Pancreas (tissue), 10 donors: ENCODE measurements at regions of chr9 and their contacts with region 1.

Region 1: GRCh38 chr9:127734747-127735529 is at the start of gene TOR2A:
- DNase-seq: peak; percentile 95 to 99 (median 98)
- ATAC-seq: peak; percentile 94 to 97 (median 96)
- H3K4me3 ChIP-seq: peak within 1 kb of the TSS; percentile 61 to 94 (median 68)
- H3K27ac ChIP-seq: peak within 1 kb of the TSS; percentile 87 to 94 (median 93)
- H3K4me1 ChIP-seq: peaks cover 0 to 6% (median 4%) of the 10 kb centered on the region in 3 donors
- H3K27me3 ChIP-seq: no peaks in the 10 kb centered on the region
- CTCF ChIP-seq: peak; percentile 88 to 90 (median 88)
- total RNA-seq, gene TOR2A: 4.2 to 9.0 (median 5.8) TPM

Region 2: DNA sequence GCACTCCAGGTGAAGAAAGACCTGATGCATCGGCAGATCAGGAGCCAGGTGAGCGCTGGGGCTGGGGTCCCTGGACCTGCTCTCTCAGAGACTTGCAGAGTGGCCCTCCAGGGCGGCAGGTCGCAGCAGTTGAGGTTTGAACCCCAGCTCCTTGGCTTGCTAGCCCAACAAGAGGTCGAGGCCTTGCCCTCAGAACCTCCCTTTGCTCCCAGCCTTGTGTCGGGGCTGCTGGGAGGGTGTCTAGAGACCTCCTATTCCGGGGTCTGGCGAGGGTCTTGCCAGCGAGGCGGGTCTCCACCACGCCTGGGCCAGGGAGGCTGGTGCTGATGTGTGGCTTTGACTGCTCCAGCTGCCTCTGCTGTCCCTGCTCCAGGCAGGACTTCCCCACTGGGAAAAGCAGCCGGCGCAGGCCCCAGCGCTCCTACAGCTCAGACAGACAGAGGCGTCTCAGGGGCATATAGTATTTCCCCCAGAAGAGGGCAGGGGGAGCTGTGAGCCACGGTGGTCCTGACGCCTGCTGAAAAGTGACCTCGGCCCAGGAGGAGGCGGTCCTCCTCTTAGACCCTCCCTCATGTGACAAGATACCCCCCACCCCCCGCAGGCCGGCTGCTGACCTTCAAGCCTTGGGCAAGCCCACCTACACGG is 245.3 kb before region 1 on chr9:
- intact Hi-C with region 1: loop called in 2 of 3 experiments (anchors 10 kb)
- DNase-seq: peak in 1 of 6 donors; percentile 63
- ATAC-seq: no peak
- H3K4me3 ChIP-seq: no peak overlapping the region
- H3K27ac ChIP-seq: no peak overlapping the region
- H3K4me1 ChIP-seq: peaks cover 2 to 7% (median 3%) of the 10 kb centered on the region in 3 donors
- H3K27me3 ChIP-seq: no peaks in the 10 kb centered on the region
- CTCF ChIP-seq: no peak

Region 3: GRCh38 chr9:127586537-127586936 is 148.4 kb before region 1 on chr9:
- intact Hi-C with region 1: loop called in 2 of 3 experiments (anchors 2 to 5 kb)
- DNase-seq: peak; percentile 72 to 86 (median 80)
- ATAC-seq: peak; percentile 79 to 92 (median 90)
- H3K4me3 ChIP-seq: no peak overlapping the region
- H3K27ac ChIP-seq: no peak overlapping the region
- H3K4me1 ChIP-seq: no peaks in the 10 kb centered on the region
- H3K27me3 ChIP-seq: no peaks in the 10 kb centered on the region
- CTCF ChIP-seq: peak; percentile 60 to 79 (median 78)

Region 4: GRCh38 chr9:127869310-127870152 is 134.6 kb after region 1 on chr9:
- intact Hi-C with region 1: loop called in 1 of 3 experiments (anchors 5 kb)
- DNase-seq: peak; percentile 81 to 97 (median 91)
- ATAC-seq: peak; percentile 84 to 95 (median 92)
- H3K4me3 ChIP-seq: no peak overlapping the region
- H3K27ac ChIP-seq: no peak overlapping the region
- H3K4me1 ChIP-seq: peaks cover 0 to under 1% (median 0%) of the 10 kb centered on the region in 3 donors
- H3K27me3 ChIP-seq: no peaks in the 10 kb centered on the region
- CTCF ChIP-seq: peak; percentile 71 to 78 (median 74)

Region 5: GRCh38 chr9:127921557-127922120 is 186.7 kb after region 1 on chr9:
- intact Hi-C with region 1: loop called in 1 of 3 experiments (anchors 5 kb)
- DNase-seq: peak in 4 of 6 donors; percentile 75 to 92 (median 86)
- ATAC-seq: peak in 3 of 4 donors; percentile 45 to 57 (median 52)
- H3K4me3 ChIP-seq: peak overlapping the region in 1 of 4 donors; percentile 17
- H3K27ac ChIP-seq: no peak overlapping the region
- H3K4me1 ChIP-seq: peaks cover 0 to 28% (median 0%) of the 10 kb centered on the region in 3 donors
- H3K27me3 ChIP-seq: no peaks in the 10 kb centered on the region
- CTCF ChIP-seq: peak; percentile 85 to 98 (median 95)